ENCODE measurements at regions of chr13 and their contacts with region 1.

Region 1: DNA sequence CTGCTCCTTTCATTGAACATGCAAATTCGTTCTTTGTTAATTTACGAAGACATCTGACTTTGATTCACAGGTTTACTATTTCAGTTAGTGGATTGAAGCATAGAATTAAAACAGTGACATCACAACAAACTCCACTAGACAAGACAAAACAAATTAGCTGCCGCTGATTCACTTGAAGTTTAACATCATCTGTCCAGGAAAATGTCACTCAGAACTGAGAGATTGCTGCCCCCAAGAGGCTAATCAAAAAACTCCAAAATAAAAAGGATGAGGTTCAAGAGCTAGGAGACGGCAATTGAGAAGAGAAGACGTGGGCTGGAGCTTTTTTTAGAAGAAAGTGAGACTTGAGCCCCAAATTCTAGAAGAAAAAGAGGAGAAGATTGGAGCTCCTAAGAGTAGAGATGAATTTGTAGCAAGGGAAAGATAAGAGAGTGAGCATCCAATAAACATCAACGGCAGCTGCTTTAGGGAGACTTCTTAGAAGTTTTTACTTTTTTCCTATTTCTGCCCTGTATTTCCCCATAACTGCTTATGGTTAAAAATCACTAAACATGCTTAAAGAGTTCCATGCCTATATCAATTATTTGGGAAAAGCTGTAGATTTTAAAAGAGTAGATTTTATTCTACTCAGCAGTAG is 40.8 kb upstream of the TPP2 start:
- DNase-seq: peak; percentile 71
- H3K4me3 Mint-ChIP-seq: no peak overlapping the region
- H3K27ac Mint-ChIP-seq: no peak overlapping the region
- H3K4me1 Mint-ChIP-seq: no peaks in the 10 kb centered on the region
- H3K27me3 Mint-ChIP-seq: peaks cover 8% of the 10 kb centered on the region

Region 2: GRCh38 chr13:101144808-101145419 is 1411.1 kb before region 1 on chr13:
- intact Hi-C with region 1: loop called (anchors 5 kb)
- DNase-seq: peak; percentile 74
- H3K4me3 Mint-ChIP-seq: no peak overlapping the region
- H3K27ac Mint-ChIP-seq: no peak overlapping the region
- H3K4me1 Mint-ChIP-seq: no peaks in the 10 kb centered on the region
- H3K27me3 Mint-ChIP-seq: peaks cover 3% of the 10 kb centered on the region

Region 3: GRCh38 chr13:101514788-101515187 is 1041.2 kb before region 1 on chr13:
- intact Hi-C with region 1: loop called (anchors 5 kb)
- DNase-seq: peak; percentile 64
- H3K4me3 Mint-ChIP-seq: no peak overlapping the region
- H3K27ac Mint-ChIP-seq: no peak overlapping the region
- H3K4me1 Mint-ChIP-seq: no peaks in the 10 kb centered on the region
- H3K27me3 Mint-ChIP-seq: peaks cover 14% of the 10 kb centered on the region

Region 4: GRCh38 chr13:101942038-101942437 is 614.0 kb before region 1 on chr13:
- intact Hi-C with region 1: loop called (anchors 10 kb)
- DNase-seq: peak; percentile 57
- H3K4me3 Mint-ChIP-seq: no peak overlapping the region
- H3K27ac Mint-ChIP-seq: no peak overlapping the region
- H3K4me1 Mint-ChIP-seq: no peaks in the 10 kb centered on the region
- H3K27me3 Mint-ChIP-seq: no peaks in the 10 kb centered on the region

Region 5: DNA sequence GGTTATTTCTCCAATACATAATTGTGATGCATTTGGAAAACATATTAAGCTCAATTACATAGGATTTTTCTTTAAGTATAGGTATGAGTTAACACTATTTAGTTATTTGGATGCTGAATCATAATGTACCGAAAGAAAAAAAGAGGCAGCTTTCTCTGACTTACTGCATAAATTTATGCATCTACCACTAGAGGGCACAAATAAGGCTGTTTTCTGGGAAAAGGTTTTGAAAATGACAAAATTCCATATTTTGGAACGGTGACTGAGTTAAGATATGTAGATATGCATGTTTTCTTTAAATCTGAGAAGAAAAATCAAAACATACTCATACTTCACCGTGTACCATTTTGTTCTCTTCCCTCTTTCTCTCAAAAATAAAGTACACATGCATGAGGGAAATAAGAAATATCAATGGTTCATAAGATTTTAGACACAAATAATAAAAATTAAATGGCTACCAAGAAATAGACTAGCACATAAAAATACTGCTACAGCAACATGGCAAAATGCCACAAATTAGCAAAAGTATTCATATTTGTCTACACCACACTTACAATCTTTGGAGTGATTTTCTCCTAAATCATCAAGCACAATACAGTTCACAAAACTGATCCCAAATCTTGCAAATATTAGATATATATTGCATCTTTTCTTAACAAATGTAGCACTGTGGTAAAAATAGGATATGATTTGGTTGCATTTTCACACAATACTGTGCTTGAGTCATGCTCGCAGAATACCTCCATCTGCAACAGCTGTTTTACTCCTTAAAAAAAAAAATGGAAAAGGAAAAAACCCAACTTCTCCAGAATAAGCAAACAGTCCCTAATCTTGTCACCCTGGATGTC is 414.2 kb before region 1 on chr13:
- intact Hi-C with region 1: loop called (anchors 5 kb)
- DNase-seq: no peak
- H3K4me3 Mint-ChIP-seq: no peak overlapping the region
- H3K27ac Mint-ChIP-seq: no peak overlapping the region
- H3K4me1 Mint-ChIP-seq: no peaks in the 10 kb centered on the region
- H3K27me3 Mint-ChIP-seq: peaks cover 2% of the 10 kb centered on the region

Region 6: GRCh38 chr13:102460801-102461200 is 95.2 kb before region 1 on chr13:
- intact Hi-C with region 1: loop called (anchors 5 kb)
- DNase-seq: no peak
- H3K4me3 Mint-ChIP-seq: no peak overlapping the region
- H3K27ac Mint-ChIP-seq: no peak overlapping the region
- H3K4me1 Mint-ChIP-seq: peaks cover 5% of the 10 kb centered on the region
- H3K27me3 Mint-ChIP-seq: peaks cover 8% of the 10 kb centered on the region

Region 7: DNA sequence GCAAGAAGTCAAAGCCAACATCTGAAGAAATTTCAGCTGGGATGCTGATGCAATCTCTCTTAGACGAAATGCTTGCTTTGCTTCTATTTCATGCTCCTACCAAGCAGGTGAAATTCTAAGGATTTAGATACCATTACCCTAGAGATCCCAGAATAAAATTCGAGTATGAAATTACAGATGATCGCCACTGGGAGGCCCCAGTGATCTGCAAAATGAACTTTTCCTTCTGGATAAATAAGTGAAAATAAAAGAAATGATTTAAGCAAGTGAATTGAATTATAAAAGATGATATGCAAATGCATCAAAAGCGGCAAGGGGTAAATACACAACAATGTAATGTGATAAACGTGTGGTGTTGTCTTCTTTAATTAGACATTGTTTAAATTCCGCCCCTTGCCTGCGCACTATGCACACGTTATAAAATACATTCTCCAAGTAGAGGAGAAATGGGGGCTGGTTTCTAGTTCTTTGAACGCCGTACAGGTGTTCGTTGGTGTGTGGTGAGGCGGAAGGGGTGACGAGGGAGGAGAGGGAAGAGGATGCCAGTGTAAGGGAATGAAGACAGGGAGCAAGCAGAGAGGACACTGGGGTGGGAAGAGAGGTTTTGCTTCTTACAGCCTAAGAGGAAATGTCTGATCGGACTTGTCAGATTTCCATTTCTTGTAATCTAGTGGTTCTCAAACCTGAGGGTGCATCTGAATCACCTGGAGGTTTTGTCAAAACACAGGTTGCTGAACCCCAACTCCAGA is 347.8 kb after region 1 on chr13:
- intact Hi-C with region 1: no loop called
- DNase-seq: no peak
- H3K4me3 Mint-ChIP-seq: no peak overlapping the region
- H3K27ac Mint-ChIP-seq: no peak overlapping the region
- H3K4me1 Mint-ChIP-seq: no peaks in the 10 kb centered on the region
- H3K27me3 Mint-ChIP-seq: peaks cover 14% of the 10 kb centered on the region

Measured in activated CD4-positive, alpha-beta T cell treated with anti-CD3 and anti-CD28 coated beads, Interleukin-2, amount 10 ng/mL, durations not matched to agents 24 days and 14 days (primary cell).